AG04450 (cell line): ENCODE measurements at regions of chr1 and their contacts with region 1.

Region 1: DNA sequence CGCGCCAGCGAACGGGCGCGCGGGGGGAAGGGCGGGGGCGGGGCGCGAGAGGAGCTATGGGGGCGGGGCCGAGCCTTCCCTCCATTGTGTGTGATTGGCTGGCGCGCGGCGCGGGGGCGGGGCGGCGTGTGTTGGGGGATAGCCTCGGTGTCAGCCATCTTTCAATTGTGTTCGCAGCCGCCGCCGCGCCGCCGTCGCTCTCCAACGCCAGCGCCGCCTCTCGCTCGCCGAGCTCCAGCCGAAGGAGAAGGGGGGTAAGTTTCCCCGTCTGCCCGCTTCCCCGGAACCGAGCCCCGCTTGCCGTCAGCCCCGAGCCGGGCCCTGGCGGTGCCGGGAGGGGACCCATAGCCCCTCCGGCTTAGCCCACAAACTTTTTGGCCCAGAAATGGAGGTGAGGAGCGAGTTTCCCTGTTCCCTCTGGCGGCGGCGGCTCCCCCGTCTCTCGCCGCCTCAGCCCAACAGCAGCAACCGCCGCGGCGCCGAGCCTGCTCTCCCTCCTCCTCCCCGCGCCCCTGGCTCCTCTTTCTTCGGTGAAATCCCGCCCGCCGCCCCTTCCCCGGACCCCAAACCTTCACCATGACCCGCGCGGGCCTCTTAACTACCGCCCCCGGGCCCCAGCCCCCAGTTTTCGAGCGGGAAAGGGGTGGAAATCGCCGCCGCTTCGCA is at the start of gene H3-3A:
- DNase-seq: peak; percentile 77
- H3K4me3 ChIP-seq: peak within 1 kb of the TSS; percentile 85
- H3K27ac ChIP-seq: peak within 1 kb of the TSS; percentile 99
- H3K27me3 ChIP-seq: no peaks in the 10 kb centered on the region
- CTCF ChIP-seq: 0 out of 2 replicates have a peak, but pooled peaks have one; percentile 11
- polyA plus RNA-seq, gene H3-3A: 260 and 330 TPM in 2 replicates

Region 2: DNA sequence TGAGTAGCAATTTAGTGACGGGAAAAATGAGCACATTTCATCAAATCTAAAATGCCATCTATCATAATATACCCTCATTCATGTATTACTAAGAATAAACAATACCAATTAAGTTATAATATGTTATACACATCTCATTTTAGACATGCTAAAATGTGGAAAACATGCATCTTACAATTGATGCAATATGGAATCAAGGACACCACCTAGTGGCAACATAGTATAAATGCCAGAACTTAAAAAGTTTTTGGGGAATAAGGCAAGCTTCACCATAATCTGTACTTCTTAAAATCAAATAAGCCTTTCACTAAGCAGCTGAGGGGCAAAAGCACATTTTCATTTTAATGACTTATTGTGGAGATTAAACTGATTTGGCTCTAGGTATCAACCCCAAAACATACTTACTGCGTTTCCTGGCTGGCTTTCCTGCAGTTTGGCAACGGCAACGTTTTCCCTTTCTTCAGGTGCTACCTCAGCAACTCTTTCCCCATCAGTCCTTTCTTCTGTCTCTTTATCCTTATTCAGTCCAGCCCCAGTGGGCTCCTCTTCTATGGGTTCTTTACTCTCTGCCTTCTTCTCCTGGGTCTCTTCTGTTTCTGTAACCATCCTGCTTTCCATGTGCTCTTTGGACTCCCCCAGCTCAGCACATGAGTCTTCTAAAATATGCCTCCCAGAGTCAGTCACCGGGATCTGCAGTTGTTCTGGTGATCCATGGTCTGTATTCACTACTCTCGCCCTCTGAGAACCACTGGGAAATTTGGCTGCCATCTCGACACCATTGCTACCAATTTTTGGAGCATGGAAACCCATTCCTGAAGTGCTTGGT is 75.0 kb before region 1 on chr1:
- CTCF ChIA-PET with region 1: interaction called, 12 read pairs
- POLR2A ChIA-PET with region 1: no interaction called
- DNase-seq: peak; percentile 20
- H3K4me3 ChIP-seq: no peak overlapping the region
- H3K27ac ChIP-seq: no peak overlapping the region
- H3K27me3 ChIP-seq: no peaks in the 10 kb centered on the region
- CTCF ChIP-seq: peak; percentile 79

Region 3: GRCh38 chr1:226074046-226074445 is 11.4 kb after region 1 on chr1:
- CTCF ChIA-PET with region 1: interaction called, 59 read pairs
- POLR2A ChIA-PET with region 1: interaction called, 5 read pairs
- DNase-seq: no peak
- H3K4me3 ChIP-seq: no peak overlapping the region
- H3K27ac ChIP-seq: no peak overlapping the region
- H3K27me3 ChIP-seq: no peaks in the 10 kb centered on the region
- CTCF ChIP-seq: no peak

Region 4: GRCh38 chr1:226100436-226101391 is 38.0 kb after region 1 on chr1:
- CTCF ChIA-PET with region 1: interaction called, 20 read pairs
- POLR2A ChIA-PET with region 1: interaction called, 7 read pairs
- DNase-seq: no peak
- H3K4me3 ChIP-seq: peak overlapping the region; percentile 46
- H3K27ac ChIP-seq: peak overlapping the region; percentile 39
- H3K27me3 ChIP-seq: peaks cover 7% of the 10 kb centered on the region
- CTCF ChIP-seq: no peak

Region 5: GRCh38 chr1:226121587-226122400 is 59.1 kb after region 1 on chr1:
- CTCF ChIA-PET with region 1: interaction called, 104 read pairs
- POLR2A ChIA-PET with region 1: interaction called, 4 read pairs
- DNase-seq: no peak
- H3K4me3 ChIP-seq: peak overlapping the region; percentile 67
- H3K27ac ChIP-seq: no peak overlapping the region
- H3K27me3 ChIP-seq: peaks cover 3% of the 10 kb centered on the region
- CTCF ChIP-seq: peak; percentile 45

Region 6: GRCh38 chr1:226201029-226201593 is 138.4 kb after region 1 on chr1:
- CTCF ChIA-PET with region 1: interaction called, 14 read pairs
- POLR2A ChIA-PET with region 1: no interaction called
- DNase-seq: no peak
- H3K4me3 ChIP-seq: no peak overlapping the region
- H3K27ac ChIP-seq: no peak overlapping the region
- H3K27me3 ChIP-seq: peaks cover 6% of the 10 kb centered on the region
- CTCF ChIP-seq: peak; percentile 53

Region 7: DNA sequence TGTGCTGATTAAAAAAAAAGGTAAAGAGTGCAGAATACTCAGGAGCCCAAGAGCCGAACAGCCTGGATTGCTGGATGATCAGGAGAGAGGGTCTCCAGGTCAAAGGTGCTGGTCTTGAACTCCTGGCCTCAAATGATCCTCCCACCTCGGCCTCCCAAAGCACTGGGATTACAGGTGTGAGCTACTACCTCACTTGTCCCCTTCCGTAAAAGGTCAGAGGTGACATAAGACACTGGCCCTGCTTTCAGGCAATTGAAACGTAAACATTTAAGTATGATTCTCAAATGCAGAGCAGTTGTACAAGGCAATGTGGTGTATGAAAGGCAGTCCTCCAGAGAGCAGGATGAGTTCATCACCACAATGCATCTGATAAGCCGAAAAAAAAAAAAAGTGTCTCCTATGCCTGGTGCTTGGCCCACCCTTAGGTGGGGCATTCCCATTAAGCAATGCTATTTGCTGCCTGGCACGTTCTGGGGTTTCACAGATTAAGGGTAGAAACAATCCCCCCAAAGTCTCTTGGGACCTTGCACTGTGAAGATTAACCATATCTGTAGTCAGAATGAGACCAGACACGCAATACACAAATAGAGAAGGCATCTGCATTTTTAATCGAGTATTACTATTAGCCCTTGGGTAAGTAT is 297.5 kb after region 1 on chr1:
- CTCF ChIA-PET with region 1: no interaction called
- POLR2A ChIA-PET with region 1: no interaction called
- DNase-seq: no peak
- H3K4me3 ChIP-seq: no peak overlapping the region
- H3K27ac ChIP-seq: no peak overlapping the region
- H3K27me3 ChIP-seq: no peaks in the 10 kb centered on the region
- CTCF ChIP-seq: no peak